Ovary (tissue), 10 donors: ENCODE measurements at regions of chr11 and their contacts with region 1.

Region 1: DNA sequence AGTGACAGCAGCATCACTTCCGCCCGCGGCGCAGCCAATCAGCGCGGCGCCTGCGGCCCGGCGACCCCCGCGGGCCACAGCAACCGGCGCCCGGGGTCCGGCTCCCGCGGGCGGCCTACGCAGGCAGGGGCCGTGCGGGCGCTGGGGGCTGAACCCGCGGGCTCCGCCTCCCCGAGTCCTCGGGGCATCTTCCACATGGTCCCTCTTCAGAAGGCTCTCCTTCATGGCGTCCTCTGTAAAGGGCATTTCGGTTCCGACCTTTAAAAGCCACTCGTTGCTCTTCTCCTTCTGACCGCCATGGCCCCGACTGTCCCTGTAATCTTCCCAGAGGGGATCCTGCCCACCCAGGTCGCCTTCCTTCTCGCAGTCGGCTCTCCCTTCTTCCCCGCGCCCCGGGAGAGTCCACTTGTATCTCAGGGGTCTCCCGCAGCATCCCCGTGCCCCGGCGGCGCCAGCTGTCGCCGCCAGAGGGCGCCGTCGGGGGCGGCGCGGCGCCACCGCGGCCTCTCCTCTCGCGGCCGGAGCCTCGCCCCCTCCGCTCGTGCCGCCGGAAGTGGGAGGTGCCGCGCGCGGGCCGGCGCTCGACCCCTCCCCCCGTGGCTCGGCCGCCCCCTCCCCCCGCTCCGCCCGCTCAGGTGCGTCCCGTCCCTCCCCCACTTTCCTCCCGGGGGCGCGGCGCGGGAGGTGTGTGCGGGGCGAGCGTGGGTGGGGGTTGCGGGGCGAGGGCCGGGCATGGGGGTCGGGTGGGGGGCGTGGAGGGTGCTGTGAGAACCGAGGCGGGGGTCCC is at the start of gene RNF214:
- DNase-seq: peak; percentile 75 to 88 (median 83)
- H3K4me3 ChIP-seq: peak within 1 kb of the TSS; percentile 63
- H3K27ac ChIP-seq: peak within 1 kb of the TSS; percentile 79 to 93
- H3K4me1 ChIP-seq: peaks cover 1% of the 10 kb centered on the region
- H3K27me3 ChIP-seq: no peaks in the 10 kb centered on the region
- CTCF ChIP-seq: peak; percentile 72 to 99 (median 96)
- EP300 ChIP-seq: no peak
- POLR2A ChIP-seq: peak; percentile 78
- total RNA-seq, gene RNF214: 9.7 to 40.9 (median 29.3) TPM

Region 2: GRCh38 chr11:117316197-117316961 is 84.1 kb after region 1 on chr11 and contains the start of gene BACE1:
- intact Hi-C with region 1: loop called in 3 of 4 experiments (anchors 2 to 10 kb)
- DNase-seq: peak; percentile 85 to 87 (median 86)
- H3K4me3 ChIP-seq: peak within 1 kb of the TSS; percentile 62
- H3K27ac ChIP-seq: peak within 1 kb of the TSS; percentile 28 to 42
- H3K4me1 ChIP-seq: peaks cover 12% of the 10 kb centered on the region
- H3K27me3 ChIP-seq: no peaks in the 10 kb centered on the region
- CTCF ChIP-seq: peak in 2 of 3 donors; percentile 40 to 59
- EP300 ChIP-seq: no peak
- POLR2A ChIP-seq: peak; percentile 37
- total RNA-seq, gene BACE1: 12.6 to 49.6 (median 30.7) TPM

Region 3: GRCh38 chr11:117327567-117328374 is 95.5 kb after region 1 on chr11 and contains the start of gene CEP164:
- intact Hi-C with region 1: loop called in 1 of 4 experiments (anchors 5 kb)
- DNase-seq: peak; percentile 94 to 97 (median 94)
- H3K4me3 ChIP-seq: peak within 1 kb of the TSS; percentile 90
- H3K27ac ChIP-seq: peak within 1 kb of the TSS; percentile 79 to 82
- H3K4me1 ChIP-seq: peaks cover 4% of the 10 kb centered on the region
- H3K27me3 ChIP-seq: no peaks in the 10 kb centered on the region
- CTCF ChIP-seq: no peak
- EP300 ChIP-seq: no peak
- POLR2A ChIP-seq: peak; percentile 66
- total RNA-seq, gene CEP164: 21.0 to 50.4 (median 32.9) TPM

Region 4: DNA sequence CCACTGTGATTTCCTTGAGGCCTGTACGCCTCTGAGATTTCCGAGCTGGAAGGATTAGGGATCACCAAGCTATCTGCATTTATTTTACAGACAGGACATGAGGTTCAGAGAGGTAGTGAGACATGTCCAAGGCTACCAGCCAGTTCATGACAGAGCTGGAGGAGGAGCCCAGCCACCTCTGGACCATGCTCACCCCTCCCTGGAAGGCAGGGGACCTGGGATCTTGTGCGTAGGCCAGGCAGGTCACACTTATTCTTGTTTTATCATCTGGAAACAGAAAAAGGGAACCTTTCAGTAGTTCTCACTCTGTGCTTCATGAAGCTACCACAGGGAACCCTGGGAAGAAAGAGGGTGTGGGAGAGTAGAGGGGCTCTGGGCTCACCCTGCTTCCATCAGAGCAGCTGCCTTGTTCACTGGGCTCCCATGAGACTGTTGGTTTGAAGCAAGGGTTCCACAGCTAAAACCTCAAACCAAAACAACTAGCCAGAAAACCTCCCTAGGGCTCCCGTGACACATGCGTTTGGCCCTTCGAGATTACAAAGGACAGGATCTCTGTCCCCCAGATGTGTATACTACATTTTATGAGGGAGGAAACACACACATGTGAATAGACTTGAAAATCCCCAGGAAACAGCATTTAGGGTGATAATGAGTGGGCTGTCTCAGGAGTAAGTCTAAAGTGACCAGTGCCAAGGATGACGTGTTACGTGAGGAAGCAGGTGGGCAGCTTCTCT is 458.4 kb after region 1 on chr11:
- intact Hi-C with region 1: no loop called
- DNase-seq: no peak
- H3K4me3 ChIP-seq: no peak overlapping the region
- H3K27ac ChIP-seq: no peak overlapping the region
- H3K4me1 ChIP-seq: no peaks in the 10 kb centered on the region
- H3K27me3 ChIP-seq: no peaks in the 10 kb centered on the region
- CTCF ChIP-seq: no peak
- EP300 ChIP-seq: no peak
- POLR2A ChIP-seq: no peak

Region 5: GRCh38 chr11:117807482-117808327 is 575.4 kb after region 1 on chr11:
- intact Hi-C with region 1: no loop called
- DNase-seq: peak; percentile 60 to 86 (median 82)
- H3K4me3 ChIP-seq: no peak overlapping the region
- H3K27ac ChIP-seq: no peak overlapping the region
- H3K4me1 ChIP-seq: peaks cover 4% of the 10 kb centered on the region
- H3K27me3 ChIP-seq: no peaks in the 10 kb centered on the region
- CTCF ChIP-seq: peak; percentile 72 to 87 (median 86)
- EP300 ChIP-seq: no peak
- POLR2A ChIP-seq: no peak